GM12878 (cell line): ENCODE measurements at regions of chr4 and their contacts with region 1.

Region 1: GRCh38 chr4:142405021-142405694 is 440.9 kb downstream of the INPP4B start:
- DNase-seq: peak; percentile 57
- ATAC-seq: peak; percentile 58
- H3K4me3 ChIP-seq: 0 out of 2 replicates have a peak overlapping the region, but pooled peaks have one; percentile 49
- H3K27ac ChIP-seq: no peak overlapping the region
- H3K4me1 ChIP-seq: no peaks in the 10 kb centered on the region; the same call in 1 of the 2 replicates
- H3K27me3 ChIP-seq: no peaks in the 10 kb centered on the region
- CTCF ChIP-seq: no peak
- EP300 ChIP-seq: 0 out of 4 replicates have a peak, but pooled peaks of 1 of the 2 experiments have one; percentile 30
- POLR2A ChIP-seq: no peak
- RAD21 ChIP-seq: no peak

Region 2: DNA sequence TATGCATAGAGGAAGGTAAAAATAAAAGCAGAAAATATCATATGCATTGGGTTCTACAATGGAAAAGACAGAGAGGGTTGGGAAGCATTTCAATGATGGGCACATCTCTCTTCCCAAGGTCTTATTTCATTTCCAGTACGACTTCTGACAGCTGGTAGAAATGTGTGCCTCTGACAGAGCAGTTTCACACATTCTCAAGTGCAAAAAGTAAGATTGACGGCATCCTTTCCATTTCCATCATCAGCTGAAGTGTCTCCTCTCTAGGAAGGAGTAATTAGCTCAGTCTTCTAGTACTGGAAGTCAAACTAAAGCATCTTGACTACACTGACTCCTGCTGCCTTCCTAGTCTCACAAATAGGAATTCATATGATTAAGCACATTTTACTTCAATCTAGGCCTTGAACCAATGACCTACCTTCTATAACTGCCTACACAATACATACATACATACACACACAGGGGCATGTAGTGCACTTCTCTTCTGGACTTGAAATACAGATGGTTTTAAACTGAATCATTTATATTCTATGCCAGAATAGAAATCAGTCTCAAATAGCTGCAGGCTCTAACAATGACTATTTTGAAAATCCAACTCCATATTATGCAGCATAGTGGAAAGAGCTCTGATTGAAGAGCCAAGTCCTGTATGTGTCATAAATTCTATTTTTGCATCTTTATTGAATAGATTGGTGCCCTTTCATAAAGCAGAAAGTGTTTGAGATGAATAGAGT is 32.5 kb before region 1 on chr4:
- CTCF ChIA-PET with region 1: interaction called, 6 read pairs
- POLR2A ChIA-PET with region 1: interaction called, 16 read pairs
- RAD21 ChIA-PET with region 1: interaction called, 60 read pairs
- SMC1A ChIA-PET with region 1: interaction called, 55 read pairs
- in situ Hi-C with region 1: no loop called
- intact Hi-C with region 1: no loop called
- DNase-seq: no peak
- ATAC-seq: peak; percentile 6
- H3K4me3 ChIP-seq: no peak overlapping the region
- H3K27ac ChIP-seq: no peak overlapping the region
- H3K4me1 ChIP-seq: no peaks in the 10 kb centered on the region
- H3K27me3 ChIP-seq: no peaks in the 10 kb centered on the region
- CTCF ChIP-seq: no peak
- EP300 ChIP-seq: no peak
- POLR2A ChIP-seq: no peak
- RAD21 ChIP-seq: no peak

Region 3: GRCh38 chr4:142416711-142417275 is 11.6 kb after region 1 on chr4:
- CTCF ChIA-PET with region 1: interaction called, 16 read pairs
- POLR2A ChIA-PET with region 1: interaction called, 8 read pairs
- RAD21 ChIA-PET with region 1: interaction called, 13 read pairs
- SMC1A ChIA-PET with region 1: interaction called, 86 read pairs
- in situ Hi-C with region 1: no loop called
- intact Hi-C with region 1: no loop called
- DNase-seq: no peak
- ATAC-seq: peak; percentile 86
- H3K4me3 ChIP-seq: no peak overlapping the region
- H3K27ac ChIP-seq: no peak overlapping the region
- H3K4me1 ChIP-seq: no peaks in the 10 kb centered on the region
- H3K27me3 ChIP-seq: no peaks in the 10 kb centered on the region; a peak in 1 of 4 replicates
- CTCF ChIP-seq: no peak
- EP300 ChIP-seq: no peak
- POLR2A ChIP-seq: no peak
- RAD21 ChIP-seq: no peak

Region 4: GRCh38 chr4:142474335-142475087 is 69.4 kb after region 1 on chr4:
- CTCF ChIA-PET with region 1: interaction called, 6 read pairs
- POLR2A ChIA-PET with region 1: no interaction called
- RAD21 ChIA-PET with region 1: interaction called, 15 read pairs
- SMC1A ChIA-PET with region 1: interaction called, 7 read pairs
- in situ Hi-C with region 1: no loop called
- intact Hi-C with region 1: no loop called
- DNase-seq: no peak
- ATAC-seq: peak; percentile 64
- H3K4me3 ChIP-seq: no peak overlapping the region
- H3K27ac ChIP-seq: no peak overlapping the region
- H3K4me1 ChIP-seq: no peaks in the 10 kb centered on the region
- H3K27me3 ChIP-seq: no peaks in the 10 kb centered on the region
- CTCF ChIP-seq: no peak
- EP300 ChIP-seq: no peak
- POLR2A ChIP-seq: no peak
- RAD21 ChIP-seq: no peak

Region 5: DNA sequence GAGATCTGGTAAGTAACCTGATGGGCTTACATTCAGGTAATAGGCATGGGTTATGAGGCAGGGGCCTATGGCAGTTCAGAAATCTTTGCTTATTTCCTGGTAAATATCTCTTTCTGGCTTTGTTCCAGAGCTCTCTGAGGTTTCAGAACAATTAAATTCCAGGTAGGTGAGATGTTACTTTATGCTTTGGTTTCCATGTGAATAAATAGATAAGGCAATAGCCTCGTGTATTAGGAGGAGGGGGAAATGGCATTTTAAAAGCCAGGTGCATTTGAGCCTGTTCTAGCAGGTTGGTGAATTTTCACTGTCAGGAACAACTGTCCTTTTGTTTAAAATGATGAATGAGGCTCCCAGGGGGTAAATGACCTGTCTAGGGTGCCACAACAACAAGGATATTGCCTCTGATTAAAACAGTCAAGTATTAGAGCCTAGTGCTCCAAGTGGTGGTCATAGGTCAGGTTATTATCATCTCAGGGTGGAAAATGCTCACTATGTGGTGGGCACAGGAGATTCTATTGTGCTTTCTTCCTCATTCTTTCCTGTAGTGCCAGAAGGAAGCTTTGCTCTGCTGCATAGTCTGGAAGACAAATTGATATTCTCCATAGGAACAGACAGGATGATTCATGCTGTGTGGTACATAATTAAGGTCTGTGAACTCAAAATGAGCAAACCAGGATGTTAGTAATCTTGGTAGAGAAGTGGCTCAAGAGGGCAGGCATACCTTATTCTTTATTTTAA is 144.7 kb after region 1 on chr4:
- CTCF ChIA-PET with region 1: no interaction called
- POLR2A ChIA-PET with region 1: interaction called, 3 read pairs
- RAD21 ChIA-PET with region 1: interaction called, 3 read pairs
- SMC1A ChIA-PET with region 1: interaction called, 5 read pairs
- in situ Hi-C with region 1: no loop called
- intact Hi-C with region 1: loop called (anchors 5 kb)
- DNase-seq: no peak
- ATAC-seq: peak; percentile 35
- H3K4me3 ChIP-seq: no peak overlapping the region
- H3K27ac ChIP-seq: no peak overlapping the region
- H3K4me1 ChIP-seq: no peaks in the 10 kb centered on the region
- H3K27me3 ChIP-seq: no peaks in the 10 kb centered on the region
- CTCF ChIP-seq: no peak
- EP300 ChIP-seq: no peak
- POLR2A ChIP-seq: no peak
- RAD21 ChIP-seq: no peak

Region 6: DNA sequence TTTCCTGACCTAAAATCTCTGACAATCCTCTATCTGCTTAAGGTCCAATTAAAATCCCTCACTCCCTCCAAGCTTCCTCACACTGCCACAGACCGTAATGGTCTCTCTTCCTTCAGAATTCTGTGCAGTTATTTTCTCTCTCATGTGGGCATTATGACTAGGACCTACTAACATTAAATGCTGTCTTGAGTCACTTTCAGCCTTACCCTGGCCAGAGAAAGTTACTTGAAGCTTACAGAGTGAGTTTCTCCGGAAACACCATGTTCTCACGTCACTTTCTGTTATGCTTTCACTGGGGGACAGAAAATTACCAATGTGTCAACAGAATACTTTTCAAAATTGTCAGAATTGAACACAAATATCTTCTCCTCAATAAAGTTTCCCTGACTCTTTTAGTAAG is 169.1 kb after region 1 on chr4:
- CTCF ChIA-PET with region 1: interaction called, 60 read pairs
- POLR2A ChIA-PET with region 1: interaction called, 29 read pairs
- RAD21 ChIA-PET with region 1: interaction called, 55 read pairs
- SMC1A ChIA-PET with region 1: interaction called, 63 read pairs
- in situ Hi-C with region 1: no loop called
- intact Hi-C with region 1: loop called (anchors 5 kb)
- DNase-seq: no peak
- ATAC-seq: peak; percentile 80
- H3K4me3 ChIP-seq: no peak overlapping the region
- H3K27ac ChIP-seq: no peak overlapping the region
- H3K4me1 ChIP-seq: no peaks in the 10 kb centered on the region
- H3K27me3 ChIP-seq: no peaks in the 10 kb centered on the region
- CTCF ChIP-seq: no peak
- EP300 ChIP-seq: no peak
- POLR2A ChIP-seq: no peak
- RAD21 ChIP-seq: no peak